AG04450 (cell line): ENCODE measurements at regions of chr5 and their contacts with region 1.

Region 1: GRCh38 chr5:17169507-17169906 is 47.9 kb upstream of the BASP1 start:
- DNase-seq: peak; percentile 68
- H3K4me3 ChIP-seq: no peak overlapping the region
- H3K27ac ChIP-seq: no peak overlapping the region
- H3K27me3 ChIP-seq: no peaks in the 10 kb centered on the region
- CTCF ChIP-seq: no peak

Region 2: GRCh38 chr5:17157916-17158529 is 11.5 kb before region 1 on chr5:
- CTCF ChIA-PET with region 1: interaction called, 3 read pairs
- POLR2A ChIA-PET with region 1: interaction called, 11 read pairs
- DNase-seq: peak; percentile 96
- H3K4me3 ChIP-seq: no peak overlapping the region
- H3K27ac ChIP-seq: peak overlapping the region; percentile 95
- H3K27me3 ChIP-seq: no peaks in the 10 kb centered on the region
- CTCF ChIP-seq: no peak

Region 3: GRCh38 chr5:17180957-17181723 is 11.6 kb after region 1 on chr5:
- CTCF ChIA-PET with region 1: no interaction called
- POLR2A ChIA-PET with region 1: interaction called, 11 read pairs
- DNase-seq: peak; percentile 96
- H3K4me3 ChIP-seq: no peak overlapping the region
- H3K27ac ChIP-seq: peak overlapping the region; percentile 96
- H3K27me3 ChIP-seq: no peaks in the 10 kb centered on the region
- CTCF ChIP-seq: no peak

Region 4: DNA sequence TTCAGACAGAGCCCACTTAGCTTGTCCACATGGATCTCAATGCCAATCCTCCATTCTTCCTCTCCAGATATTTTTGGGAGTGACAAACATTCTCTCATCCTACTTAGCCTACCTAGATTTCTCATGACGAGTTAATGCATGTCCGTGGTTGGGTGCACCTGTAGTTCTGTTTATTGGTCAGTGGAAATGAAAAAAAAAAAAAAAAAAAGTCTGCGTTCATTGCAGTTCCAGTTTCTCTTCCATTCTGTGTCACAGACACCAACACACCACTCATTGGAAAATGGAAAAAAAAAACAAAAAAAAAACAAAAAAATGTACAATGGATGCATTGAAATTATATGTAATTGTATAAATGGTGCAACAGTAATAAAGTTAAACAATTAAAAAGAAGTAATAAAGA is 106.9 kb after region 1 on chr5:
- CTCF ChIA-PET with region 1: no interaction called
- POLR2A ChIA-PET with region 1: no interaction called
- DNase-seq: no peak
- H3K4me3 ChIP-seq: no peak overlapping the region
- H3K27ac ChIP-seq: no peak overlapping the region
- H3K27me3 ChIP-seq: no peaks in the 10 kb centered on the region
- CTCF ChIP-seq: no peak